Prostate gland (tissue), 2 donors: ENCODE measurements at regions of chr18 and their contacts with region 1.

Region 1: DNA sequence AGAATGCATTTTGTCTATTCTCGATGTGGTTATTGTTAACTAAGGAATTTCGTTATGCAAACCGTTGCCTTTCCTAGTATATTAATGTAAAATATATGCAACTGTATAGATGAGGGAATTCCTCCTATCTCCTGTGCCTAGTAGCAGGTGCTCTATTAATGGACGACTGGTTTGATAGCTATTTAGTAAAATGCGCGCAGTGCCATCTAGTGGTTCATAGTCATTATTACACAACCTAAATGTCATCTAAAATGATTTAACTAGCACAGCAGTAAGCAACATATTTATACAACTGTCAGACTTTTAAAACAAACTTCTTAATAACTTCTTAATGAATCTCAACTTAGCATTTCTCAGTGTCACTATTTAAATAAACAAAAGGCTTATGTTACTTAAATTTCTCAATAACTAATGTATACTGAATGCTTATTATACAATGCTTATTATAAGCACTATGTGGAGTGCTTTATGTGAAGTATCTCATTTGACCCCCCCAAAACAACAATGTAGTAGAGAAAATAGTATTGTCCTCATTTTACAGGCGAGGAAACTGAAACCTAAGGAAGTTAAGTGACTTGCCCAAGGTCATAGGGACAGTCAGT is 77.9 kb downstream of the DTNA start:
- DNase-seq: peak; percentile 57
- H3K4me3 ChIP-seq: no peak overlapping the region
- H3K27ac ChIP-seq: no peak overlapping the region
- H3K4me1 ChIP-seq: no peaks in the 10 kb centered on the region
- H3K27me3 ChIP-seq: no peaks in the 10 kb centered on the region
- CTCF ChIP-seq: peak; percentile 61 to 85 (median 80)
- POLR2A ChIP-seq: no peak

Region 2: DNA sequence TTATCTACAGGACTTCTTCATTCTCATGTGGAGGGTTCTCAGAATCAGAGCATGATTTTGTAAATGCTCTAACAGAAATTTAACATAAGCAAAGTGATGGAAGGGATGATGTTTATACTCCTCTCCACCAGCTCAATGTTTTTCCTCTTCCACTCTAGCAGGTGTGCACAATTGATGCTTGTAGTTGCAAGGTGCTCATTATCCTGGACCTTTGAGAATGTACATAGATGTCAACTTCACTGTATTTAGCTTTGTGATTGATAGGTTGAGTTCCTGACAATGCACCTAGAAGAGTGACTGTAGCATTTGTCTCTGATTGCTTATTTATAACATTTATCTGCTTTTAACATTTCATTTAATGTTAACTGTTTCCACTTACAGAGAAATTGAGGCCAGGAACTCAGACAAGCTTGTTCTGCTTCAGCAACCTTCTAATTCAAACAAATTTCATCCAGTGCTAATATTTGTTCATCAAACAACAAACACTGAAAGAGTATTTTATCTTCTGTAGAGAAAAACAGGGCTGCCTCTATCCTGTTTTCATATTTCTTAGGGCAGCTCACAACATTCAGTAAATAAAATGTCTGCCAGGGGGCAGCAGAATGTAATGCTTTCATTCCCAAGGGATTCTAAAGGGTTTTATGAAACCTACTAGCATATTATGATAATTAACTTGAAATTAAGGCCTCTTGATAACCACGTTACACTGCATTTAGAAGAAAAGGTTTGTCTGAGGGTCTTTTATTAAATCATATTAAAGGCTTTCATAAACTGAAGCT is 435.5 kb before region 1 on chr18:
- intact Hi-C with region 1: loop called (anchors 10 kb)
- DNase-seq: no peak
- H3K4me3 ChIP-seq: no peak overlapping the region
- H3K27ac ChIP-seq: no peak overlapping the region
- H3K4me1 ChIP-seq: no peaks in the 10 kb centered on the region
- H3K27me3 ChIP-seq: no peaks in the 10 kb centered on the region
- CTCF ChIP-seq: peak in 1 of 4 experiments; percentile 9
- POLR2A ChIP-seq: no peak

Region 3: GRCh38 chr18:34493099-34493544 is 294.9 kb before region 1 on chr18:
- intact Hi-C with region 1: loop called (anchors 5 kb)
- DNase-seq: peak; percentile 10
- H3K4me3 ChIP-seq: peak overlapping the region; percentile 27 to 39
- H3K27ac ChIP-seq: peak overlapping the region in 1 of 2 donors; percentile 58
- H3K4me1 ChIP-seq: no peaks in the 10 kb centered on the region
- H3K27me3 ChIP-seq: no peaks in the 10 kb centered on the region
- CTCF ChIP-seq: no peak
- POLR2A ChIP-seq: no peak

Region 4: DNA sequence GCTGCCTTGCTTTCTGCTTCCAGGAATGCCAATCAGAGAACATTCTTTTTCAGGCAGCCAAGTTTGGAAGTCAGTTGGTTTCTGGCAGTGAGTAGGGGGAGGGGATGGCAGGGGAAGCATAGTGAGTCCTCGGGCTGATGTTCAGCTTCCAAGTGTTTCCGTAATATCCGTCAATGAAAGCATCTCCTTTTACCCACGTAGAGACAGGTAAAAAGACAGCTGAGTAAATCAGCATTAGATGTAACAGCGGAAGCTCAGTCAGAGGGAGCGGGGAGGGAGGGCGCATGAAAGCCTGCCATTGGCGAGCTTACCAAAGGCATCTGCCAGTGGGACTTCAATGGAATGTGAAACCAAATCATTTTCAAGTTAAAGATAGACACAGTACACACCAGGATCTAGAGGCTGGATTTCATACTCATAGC is 195.1 kb before region 1 on chr18:
- intact Hi-C with region 1: loop called (anchors 2 kb)
- DNase-seq: peak; percentile 14
- H3K4me3 ChIP-seq: no peak overlapping the region
- H3K27ac ChIP-seq: peak overlapping the region; percentile 15 to 42
- H3K4me1 ChIP-seq: no peaks in the 10 kb centered on the region
- H3K27me3 ChIP-seq: no peaks in the 10 kb centered on the region
- CTCF ChIP-seq: no peak
- POLR2A ChIP-seq: no peak

Region 5: GRCh38 chr18:34661464-34662111 is 126.4 kb before region 1 on chr18:
- intact Hi-C with region 1: loop called (anchors 5 kb)
- DNase-seq: no peak
- H3K4me3 ChIP-seq: no peak overlapping the region
- H3K27ac ChIP-seq: no peak overlapping the region
- H3K4me1 ChIP-seq: no peaks in the 10 kb centered on the region
- H3K27me3 ChIP-seq: no peaks in the 10 kb centered on the region
- CTCF ChIP-seq: peak; percentile 47 to 53 (median 50)
- POLR2A ChIP-seq: no peak